Caco-2 (cell line): ENCODE measurements at regions of chr11 and their contacts with region 1.

Region 1: DNA sequence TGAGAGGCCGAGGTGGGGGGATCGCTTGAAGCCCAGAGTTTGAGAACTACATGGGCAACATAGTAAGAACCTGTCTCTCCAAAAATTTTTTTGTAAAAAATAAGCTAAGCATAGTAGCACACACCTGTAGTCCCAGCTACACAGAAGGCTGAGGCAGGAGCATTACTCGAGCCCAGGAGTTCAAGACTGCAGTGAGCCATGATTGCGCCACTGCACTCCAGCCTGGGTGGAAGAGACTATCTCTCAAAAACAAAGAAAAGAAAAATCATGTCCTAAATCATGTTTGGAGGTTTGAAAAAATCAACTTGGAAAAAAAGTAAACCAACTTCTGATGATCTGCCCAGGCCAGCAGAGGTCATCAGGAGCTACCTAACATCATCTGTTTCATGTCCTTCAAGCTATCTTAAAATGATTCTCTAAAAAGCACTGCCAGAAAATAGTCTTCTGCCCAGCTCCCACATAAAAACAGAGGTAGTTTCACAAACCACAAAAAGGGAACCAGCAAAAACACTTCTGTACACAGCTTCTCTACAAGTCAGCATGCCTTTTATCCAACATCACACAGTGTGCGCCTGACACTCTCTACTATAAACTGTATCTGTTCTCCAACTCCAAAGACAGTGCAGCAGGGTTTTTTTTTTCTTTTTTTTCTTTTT is 165.0 kb downstream of the SOX6 start:
- DNase-seq: no peak
- H3K4me3 ChIP-seq: no peak overlapping the region
- H3K4me3 Mint-ChIP-seq: no peak overlapping the region
- H3K27ac Mint-ChIP-seq: peak overlapping the region; percentile 57
- H3K4me1 ChIP-seq: peaks cover 48% of the 10 kb centered on the region
- H3K4me1 Mint-ChIP-seq: peaks cover 43% of the 10 kb centered on the region
- H3K27me3 ChIP-seq: no peaks in the 10 kb centered on the region
- H3K27me3 Mint-ChIP-seq: no peaks in the 10 kb centered on the region
- CTCF ChIP-seq: peak; percentile 34 to 45

Region 2: GRCh38 chr11:16097543-16097942 is 93.8 kb before region 1 on chr11:
- CTCF ChIA-PET with region 1: no interaction called
- POLR2A ChIA-PET with region 1: interaction called, 4 read pairs
- intact Hi-C with region 1: loop called (anchors 5 kb)
- DNase-seq: peak; percentile 60 to 64
- H3K4me3 ChIP-seq: no peak overlapping the region
- H3K4me3 Mint-ChIP-seq: no peak overlapping the region
- H3K27ac Mint-ChIP-seq: peak overlapping the region; percentile 64
- H3K4me1 ChIP-seq: peaks cover 43% of the 10 kb centered on the region
- H3K4me1 Mint-ChIP-seq: peaks cover 40% of the 10 kb centered on the region
- H3K27me3 ChIP-seq: no peaks in the 10 kb centered on the region
- H3K27me3 Mint-ChIP-seq: no peaks in the 10 kb centered on the region
- CTCF ChIP-seq: no peak

Region 3: GRCh38 chr11:16271258-16271657 is 79.9 kb after region 1 on chr11:
- CTCF ChIA-PET with region 1: no interaction called
- POLR2A ChIA-PET with region 1: no interaction called
- intact Hi-C with region 1: loop called (anchors 2 kb)
- DNase-seq: no peak
- H3K4me3 ChIP-seq: no peak overlapping the region
- H3K4me3 Mint-ChIP-seq: no peak overlapping the region
- H3K27ac Mint-ChIP-seq: no peak overlapping the region
- H3K4me1 ChIP-seq: no peaks in the 10 kb centered on the region
- H3K4me1 Mint-ChIP-seq: no peaks in the 10 kb centered on the region
- H3K27me3 ChIP-seq: no peaks in the 10 kb centered on the region
- H3K27me3 Mint-ChIP-seq: no peaks in the 10 kb centered on the region
- CTCF ChIP-seq: no peak

Region 4: DNA sequence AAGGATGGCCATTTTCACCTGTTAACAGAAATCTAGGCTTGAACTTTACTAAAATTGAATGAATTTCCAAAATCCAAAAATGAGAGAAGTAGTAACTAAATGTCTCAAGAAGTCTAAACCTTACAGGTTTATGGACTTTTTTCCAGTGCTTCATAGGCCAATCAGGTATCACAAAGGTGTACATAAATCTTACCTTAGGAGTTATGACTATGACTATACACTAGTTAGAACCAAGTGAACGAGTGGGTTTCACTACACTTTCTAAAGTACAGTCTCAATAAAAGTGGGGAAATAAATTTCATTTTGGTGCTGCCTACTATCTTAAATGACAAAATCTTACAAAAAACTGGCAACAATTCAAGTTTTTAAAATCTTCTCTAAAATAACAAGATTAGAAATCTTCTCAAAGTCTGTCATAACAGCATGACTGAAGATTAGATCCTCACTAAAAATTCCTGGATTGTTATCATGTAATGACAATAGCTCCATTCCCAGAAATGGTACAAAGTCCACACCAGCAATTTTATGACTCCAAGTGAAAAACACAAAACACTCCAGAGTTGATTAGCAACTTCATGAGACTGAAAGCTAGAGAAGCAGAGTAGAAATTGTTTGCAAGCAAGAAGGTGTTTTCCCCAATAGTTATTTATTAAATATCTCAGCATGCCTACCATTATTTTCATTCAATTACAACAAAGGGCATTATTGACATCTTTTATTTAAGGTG is 144.1 kb after region 1 on chr11:
- CTCF ChIA-PET with region 1: no interaction called
- POLR2A ChIA-PET with region 1: no interaction called
- intact Hi-C with region 1: loop called (anchors 1 kb)
- DNase-seq: peak in 1 of 2 experiments; percentile 62
- H3K4me3 ChIP-seq: no peak overlapping the region
- H3K4me3 Mint-ChIP-seq: peak overlapping the region; percentile 12
- H3K27ac Mint-ChIP-seq: peak overlapping the region; percentile 85
- H3K4me1 ChIP-seq: peaks cover 46% of the 10 kb centered on the region
- H3K4me1 Mint-ChIP-seq: peaks cover 21% of the 10 kb centered on the region
- H3K27me3 ChIP-seq: no peaks in the 10 kb centered on the region
- H3K27me3 Mint-ChIP-seq: no peaks in the 10 kb centered on the region
- CTCF ChIP-seq: no peak

Region 5: GRCh38 chr11:16356057-16356760 is 164.9 kb after region 1 on chr11 and contains the start of gene SOX6:
- CTCF ChIA-PET with region 1: interaction called, 8 read pairs
- POLR2A ChIA-PET with region 1: no interaction called
- intact Hi-C with region 1: loop called (anchors 1 kb)
- DNase-seq: peak; percentile 47 to 56
- H3K4me3 ChIP-seq: no peak within 1 kb of the TSS
- H3K4me3 Mint-ChIP-seq: peak within 1 kb of the TSS; percentile 20
- H3K27ac Mint-ChIP-seq: peak within 1 kb of the TSS; percentile 48
- H3K4me1 ChIP-seq: peaks cover 29% of the 10 kb centered on the region
- H3K4me1 Mint-ChIP-seq: peaks cover 37% of the 10 kb centered on the region
- H3K27me3 ChIP-seq: no peaks in the 10 kb centered on the region
- H3K27me3 Mint-ChIP-seq: no peaks in the 10 kb centered on the region
- CTCF ChIP-seq: peak in 1 of 2 experiments; percentile 13
- total RNA-seq, gene SOX6: 10.8 and 24.0 TPM in 2 replicates

Region 6: GRCh38 chr11:16382638-16383380 is 191.5 kb after region 1 on chr11:
- CTCF ChIA-PET with region 1: no interaction called
- POLR2A ChIA-PET with region 1: no interaction called
- intact Hi-C with region 1: no loop called
- DNase-seq: no peak
- H3K4me3 ChIP-seq: no peak overlapping the region
- H3K4me3 Mint-ChIP-seq: no peak overlapping the region
- H3K27ac Mint-ChIP-seq: no peak overlapping the region
- H3K4me1 ChIP-seq: no peaks in the 10 kb centered on the region
- H3K4me1 Mint-ChIP-seq: no peaks in the 10 kb centered on the region
- H3K27me3 ChIP-seq: no peaks in the 10 kb centered on the region
- H3K27me3 Mint-ChIP-seq: no peaks in the 10 kb centered on the region
- CTCF ChIP-seq: no peak